SK-N-SH (cell line): ENCODE measurements at regions of chr22 and their contacts with region 1.

Region 1: DNA sequence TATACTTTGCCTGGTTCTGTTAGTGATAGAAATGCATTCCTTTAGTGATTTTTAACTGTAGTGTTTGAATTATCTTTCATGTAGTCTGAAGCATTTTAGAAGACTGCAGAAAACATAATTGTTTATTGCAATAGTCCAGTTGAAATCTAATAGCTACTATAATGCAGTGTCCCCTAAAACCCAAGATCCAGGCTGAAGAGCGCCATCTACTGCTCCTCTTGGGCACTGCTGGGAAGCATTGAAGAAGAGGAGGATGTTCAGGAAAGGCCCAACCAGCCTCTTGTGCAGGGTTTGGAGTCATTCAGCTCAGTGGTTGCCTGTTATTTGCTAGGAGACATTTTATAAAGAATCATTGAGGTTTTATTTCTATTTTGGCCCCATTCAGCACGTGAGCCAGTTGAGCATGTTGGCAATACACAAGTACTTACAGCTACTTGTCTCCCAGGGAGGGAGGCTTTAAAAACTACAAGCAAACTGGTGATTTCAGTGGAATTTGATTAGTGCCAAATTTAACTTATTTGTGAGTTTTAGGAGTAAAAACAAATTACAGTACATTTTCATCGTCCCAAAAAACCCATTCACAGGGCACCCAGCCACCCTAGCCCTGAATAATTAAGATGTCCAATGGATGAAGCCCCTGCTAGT is 74.9 kb upstream of the HORMAD2 start:
- DNase-seq: peak; percentile 63
- H3K4me3 ChIP-seq: no peak overlapping the region
- H3K27ac ChIP-seq: peak overlapping the region in 1 of 2 experiments; percentile 69; a peak in 2 of 4 replicates
- H3K4me1 ChIP-seq: peaks cover 14 to 34% of the 10 kb centered on the region in 2 experiments
- H3K27me3 ChIP-seq: no peaks in the 10 kb centered on the region
- CTCF ChIP-seq: peak; percentile 99
- EP300 ChIP-seq: no peak
- RAD21 ChIP-seq: peak; percentile 91

Region 2: GRCh38 chr22:29635734-29636357 is 369.5 kb before region 1 on chr22:
- CTCF ChIA-PET with region 1: interaction called, 54 read pairs
- POLR2A ChIA-PET with region 1: no interaction called
- DNase-seq: peak; percentile 60
- H3K4me3 ChIP-seq: no peak overlapping the region; a peak in 1 of 4 replicates
- H3K27ac ChIP-seq: no peak overlapping the region
- H3K4me1 ChIP-seq: peaks cover 0 to 19% of the 10 kb centered on the region in 2 experiments; a peak in 2 of 4 replicates
- H3K27me3 ChIP-seq: no peaks in the 10 kb centered on the region
- CTCF ChIP-seq: peak; percentile 79
- EP300 ChIP-seq: no peak
- RAD21 ChIP-seq: peak; percentile 91

Region 3: DNA sequence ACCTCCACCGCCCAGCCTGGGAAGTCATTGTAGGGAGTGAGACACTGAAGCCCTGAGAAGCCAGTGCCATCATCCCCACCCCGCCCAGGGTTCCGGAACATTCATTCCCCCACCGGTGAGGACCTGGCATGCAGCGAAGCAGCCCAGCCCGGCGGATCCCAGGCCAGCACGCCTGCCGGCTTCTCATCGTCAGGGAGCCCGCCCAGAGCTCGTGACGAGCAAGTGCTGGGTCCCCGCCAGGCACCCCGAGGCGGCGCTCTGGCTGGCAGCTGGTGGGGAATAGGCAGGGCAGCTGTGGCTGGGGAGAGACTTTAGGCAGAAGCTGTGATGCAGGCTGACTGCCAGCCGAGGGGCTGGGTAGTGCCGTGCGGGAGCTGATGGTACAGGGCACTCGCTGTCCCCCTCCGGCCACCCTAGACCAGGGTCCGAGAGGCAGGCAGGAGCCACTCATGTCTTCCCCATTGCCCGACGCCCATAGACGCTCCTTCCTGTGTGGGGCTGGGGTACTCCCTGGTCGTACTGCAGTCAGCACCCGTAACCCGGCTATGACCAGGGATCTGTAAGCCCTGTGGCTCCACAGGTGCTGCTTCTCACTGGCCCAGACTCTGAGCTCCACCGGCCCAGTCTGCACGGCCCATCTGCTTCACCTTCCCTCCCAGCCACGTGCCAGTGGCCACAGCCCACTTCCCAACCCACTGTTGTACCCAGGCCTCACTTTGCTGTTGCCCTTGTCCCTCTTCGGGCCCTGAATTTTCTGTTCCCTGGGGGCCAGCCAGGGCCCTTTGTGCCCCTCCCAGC is 310.0 kb before region 1 on chr22:
- CTCF ChIA-PET with region 1: interaction called, 64 read pairs
- POLR2A ChIA-PET with region 1: no interaction called
- DNase-seq: peak; percentile 86
- H3K4me3 ChIP-seq: no peak overlapping the region
- H3K27ac ChIP-seq: peak overlapping the region in 1 of 2 experiments; percentile 77; a peak in 2 of 4 replicates
- H3K4me1 ChIP-seq: peaks cover 10 to 75% of the 10 kb centered on the region in 2 experiments
- H3K27me3 ChIP-seq: no peaks in the 10 kb centered on the region
- CTCF ChIP-seq: no peak
- EP300 ChIP-seq: peak in 1 of 2 experiments; percentile 74; a peak in 2 of 4 replicates
- RAD21 ChIP-seq: peak; percentile 23; the same call in 1 of the 2 replicates

Region 4: GRCh38 chr22:29733362-29734201 is 271.8 kb before region 1 on chr22:
- CTCF ChIA-PET with region 1: interaction called, 14 read pairs
- POLR2A ChIA-PET with region 1: no interaction called
- DNase-seq: peak; percentile 83
- H3K4me3 ChIP-seq: no peak overlapping the region
- H3K27ac ChIP-seq: peak overlapping the region in 1 of 2 experiments; percentile 78; a peak in 2 of 4 replicates
- H3K4me1 ChIP-seq: peaks cover 0 to 30% of the 10 kb centered on the region in 2 experiments; a peak in 1 of 4 replicates
- H3K27me3 ChIP-seq: no peaks in the 10 kb centered on the region
- CTCF ChIP-seq: no peak
- EP300 ChIP-seq: 0 out of 4 replicates have a peak, but pooled peaks of 1 of the 2 experiments have one; percentile 8
- RAD21 ChIP-seq: 0 out of 2 replicates have a peak, but pooled peaks have one; percentile 9

Region 5: GRCh38 chr22:29886596-29886995 is 118.7 kb before region 1 on chr22:
- CTCF ChIA-PET with region 1: interaction called, 12 read pairs
- POLR2A ChIA-PET with region 1: no interaction called
- DNase-seq: no peak
- H3K4me3 ChIP-seq: no peak overlapping the region
- H3K27ac ChIP-seq: no peak overlapping the region
- H3K4me1 ChIP-seq: peaks cover 8 to 19% of the 10 kb centered on the region in 2 experiments; a peak in 3 of 4 replicates
- H3K27me3 ChIP-seq: no peaks in the 10 kb centered on the region
- CTCF ChIP-seq: no peak
- EP300 ChIP-seq: no peak
- RAD21 ChIP-seq: no peak

Region 6: DNA sequence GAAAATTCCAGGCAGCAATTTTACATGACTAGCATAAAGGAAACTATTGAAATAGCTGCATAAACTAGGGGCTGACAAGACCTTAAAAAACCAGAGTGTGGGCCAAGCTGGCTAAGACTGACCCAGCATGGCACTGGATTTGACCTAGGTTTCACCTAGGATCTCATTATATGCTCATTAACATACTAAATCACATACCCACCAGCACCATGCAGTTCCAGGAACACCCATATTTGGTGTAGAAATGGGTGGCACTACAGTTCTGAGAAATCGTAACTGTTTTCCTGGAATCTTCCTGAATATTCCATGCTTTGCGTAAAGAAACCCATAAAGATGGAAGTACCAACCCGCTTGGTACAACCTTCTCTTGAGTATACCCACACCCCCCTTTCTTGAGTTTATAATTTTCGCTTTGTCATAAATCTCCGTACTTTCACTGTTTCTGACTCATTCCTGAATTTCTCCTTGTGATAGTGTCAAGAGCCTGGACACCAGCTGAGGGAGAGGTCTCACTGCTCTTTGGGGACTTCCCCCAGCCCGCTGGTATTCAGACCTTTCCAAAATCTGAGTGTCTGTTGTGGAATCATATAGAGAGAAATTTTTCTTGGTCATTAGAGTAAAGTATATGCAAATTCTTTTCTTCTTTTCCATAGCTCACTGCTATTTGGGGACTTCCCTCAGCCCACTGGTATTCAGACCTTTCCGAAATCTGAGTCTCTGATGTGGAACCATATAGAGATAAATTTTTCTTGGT is 67.2 kb before region 1 on chr22:
- CTCF ChIA-PET with region 1: no interaction called
- POLR2A ChIA-PET with region 1: no interaction called
- DNase-seq: no peak
- H3K4me3 ChIP-seq: no peak overlapping the region
- H3K27ac ChIP-seq: no peak overlapping the region
- H3K4me1 ChIP-seq: no peaks in the 10 kb centered on the region
- H3K27me3 ChIP-seq: no peaks in the 10 kb centered on the region
- CTCF ChIP-seq: no peak
- EP300 ChIP-seq: no peak
- RAD21 ChIP-seq: no peak

Region 7: DNA sequence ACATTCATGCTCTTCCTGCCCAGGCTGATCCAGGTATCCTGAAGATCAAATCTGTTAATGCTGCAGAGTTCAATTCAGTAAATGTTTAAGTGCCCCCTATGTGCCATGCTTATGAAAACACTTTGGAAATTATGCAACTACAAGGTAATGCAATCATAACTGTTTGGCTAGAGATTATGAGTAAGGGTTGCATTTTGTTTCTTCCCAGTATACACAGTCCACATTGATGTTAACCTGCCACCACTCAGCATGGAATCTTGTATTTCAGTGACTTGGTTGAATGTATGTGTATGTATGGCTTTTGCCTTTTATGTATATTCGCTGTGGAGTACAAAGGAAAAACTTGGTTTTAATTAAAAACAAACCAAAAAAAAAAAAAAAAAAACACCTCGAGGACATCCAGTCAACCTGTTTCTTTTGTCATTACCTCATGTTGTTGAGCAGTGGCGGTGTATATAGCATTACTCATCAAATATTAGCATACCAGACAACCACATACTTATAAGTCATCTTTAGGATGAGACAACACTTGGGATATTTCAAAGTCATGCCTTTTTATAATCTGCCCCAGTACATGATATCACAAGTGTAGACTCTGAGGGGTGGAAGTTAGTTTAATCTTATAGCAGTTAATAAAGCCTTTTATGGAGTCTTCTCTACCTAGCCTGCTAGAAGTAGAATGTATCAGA is 11.2 kb before region 1 on chr22:
- CTCF ChIA-PET with region 1: interaction called, 46 read pairs
- POLR2A ChIA-PET with region 1: no interaction called
- DNase-seq: peak; percentile 14
- H3K4me3 ChIP-seq: no peak overlapping the region
- H3K27ac ChIP-seq: peak overlapping the region in 1 of 2 experiments; percentile 78; a peak in 3 of 4 replicates
- H3K4me1 ChIP-seq: peaks cover 5 to 33% of the 10 kb centered on the region in 2 experiments
- H3K27me3 ChIP-seq: no peaks in the 10 kb centered on the region
- CTCF ChIP-seq: no peak; the same call in 1 of the 2 replicates
- EP300 ChIP-seq: 0 out of 4 replicates have a peak, but pooled peaks of 1 of the 2 experiments have one; percentile 62
- RAD21 ChIP-seq: peak; percentile 51

Region 8: GRCh38 chr22:30033137-30033536 is 27.8 kb after region 1 on chr22:
- CTCF ChIA-PET with region 1: interaction called, 17 read pairs
- POLR2A ChIA-PET with region 1: interaction called, 3 read pairs
- DNase-seq: no peak
- H3K4me3 ChIP-seq: no peak overlapping the region
- H3K27ac ChIP-seq: no peak overlapping the region
- H3K4me1 ChIP-seq: peaks cover 2 to 5% of the 10 kb centered on the region in 2 experiments; a peak in 3 of 4 replicates
- H3K27me3 ChIP-seq: no peaks in the 10 kb centered on the region
- CTCF ChIP-seq: no peak
- EP300 ChIP-seq: no peak
- RAD21 ChIP-seq: no peak